ENCODE measurements at regions of chr3 and their contacts with region 1.

Region 1: DNA sequence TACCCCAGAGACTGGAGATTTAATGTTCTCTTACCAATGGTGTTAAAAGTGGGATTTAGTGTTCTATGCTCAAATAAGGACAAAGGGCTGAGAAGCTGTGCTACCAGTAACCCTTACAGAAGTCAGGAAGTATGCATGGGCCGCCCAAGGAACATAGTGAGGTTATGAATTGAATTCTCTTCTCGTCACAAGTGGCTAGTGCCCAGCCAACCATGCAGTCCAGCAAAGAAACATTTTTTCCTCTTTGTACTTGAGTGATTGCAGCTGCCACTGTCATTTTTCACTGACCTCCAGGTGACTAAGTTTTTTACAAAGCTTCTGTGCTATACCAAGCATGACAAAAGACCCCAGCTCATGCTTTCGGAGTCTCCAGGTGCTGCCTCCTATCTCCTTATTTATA is 110.6 kb upstream of the DCBLD2 start:
- DNase-seq: peak; percentile 96
- H3K4me3 ChIP-seq: peak overlapping the region; percentile 54
- H3K27ac ChIP-seq: peak overlapping the region; percentile 96
- H3K4me1 ChIP-seq: peaks cover 71% of the 10 kb centered on the region
- CTCF ChIP-seq: no peak; the same call in 1 of the 2 replicates

Region 2: DNA sequence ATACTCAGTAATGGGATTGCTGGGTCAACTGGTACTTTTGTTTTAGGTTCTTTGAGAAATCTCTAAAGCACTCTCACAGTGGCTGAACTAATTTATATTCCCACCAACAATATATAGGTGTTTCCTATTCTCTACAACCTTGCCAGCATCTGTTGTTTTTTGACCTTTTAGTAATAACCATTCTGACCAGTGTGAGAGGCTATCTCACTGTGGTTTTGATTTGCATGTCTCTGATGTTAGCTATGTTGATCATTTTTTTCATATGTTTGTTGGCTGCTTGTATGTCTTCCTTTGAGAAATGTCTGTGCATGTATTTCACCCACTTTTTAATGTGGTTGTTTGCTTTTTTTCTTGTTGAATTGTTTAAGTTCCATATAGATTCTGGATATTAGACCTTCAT is 12.4 kb before region 1 on chr3:
- CTCF ChIA-PET with region 1: interaction called, 3 read pairs
- POLR2A ChIA-PET with region 1: interaction called, 16 read pairs
- intact Hi-C with region 1: no loop called
- DNase-seq: peak; percentile 10
- H3K4me3 ChIP-seq: peak overlapping the region; percentile 31
- H3K27ac ChIP-seq: peak overlapping the region; percentile 1
- H3K4me1 ChIP-seq: peaks cover 33% of the 10 kb centered on the region
- CTCF ChIP-seq: no peak

Measured in OCI-LY7 (cell line).